GM12878 (cell line): ENCODE measurements at regions of chr20 and their contacts with region 1.

Region 1: GRCh38 chr20:55116598-55116997 is 641.2 kb downstream of the DOK5 start:
- DNase-seq: peak; percentile 25
- ATAC-seq: peak; percentile 74
- H3K4me3 ChIP-seq: no peak overlapping the region
- H3K27ac ChIP-seq: no peak overlapping the region
- H3K4me1 ChIP-seq: no peaks in the 10 kb centered on the region
- H3K27me3 ChIP-seq: no peaks in the 10 kb centered on the region
- CTCF ChIP-seq: no peak
- EP300 ChIP-seq: no peak
- POLR2A ChIP-seq: no peak
- RAD21 ChIP-seq: no peak

Region 2: DNA sequence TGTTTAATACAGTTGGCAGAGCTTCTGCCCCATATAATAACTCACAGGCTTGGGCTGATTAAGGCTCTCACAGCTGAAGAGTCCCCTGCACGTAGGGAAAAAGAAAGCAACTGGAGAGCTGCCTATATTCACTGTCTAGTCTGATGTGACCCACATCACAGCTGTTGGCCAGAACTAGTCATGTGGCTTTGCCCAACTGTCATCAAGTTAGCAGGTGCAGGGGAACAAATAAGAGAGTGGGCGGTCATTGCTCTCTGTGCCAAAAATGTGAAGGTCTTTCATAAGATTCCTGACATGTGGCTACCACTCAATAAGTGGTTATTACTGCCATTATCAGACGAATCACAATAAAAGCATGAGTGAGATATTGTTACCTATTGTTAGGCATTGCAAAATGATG is 24.0 kb after region 1 on chr20:
- CTCF ChIA-PET with region 1: interaction called, 3 read pairs
- POLR2A ChIA-PET with region 1: interaction called, 7 read pairs
- RAD21 ChIA-PET with region 1: interaction called, 16 read pairs
- SMC1A ChIA-PET with region 1: interaction called, 16 read pairs
- in situ Hi-C with region 1: no loop called
- intact Hi-C with region 1: no loop called
- DNase-seq: no peak
- ATAC-seq: peak; percentile 76
- H3K4me3 ChIP-seq: no peak overlapping the region
- H3K27ac ChIP-seq: no peak overlapping the region
- H3K4me1 ChIP-seq: no peaks in the 10 kb centered on the region
- H3K27me3 ChIP-seq: no peaks in the 10 kb centered on the region
- CTCF ChIP-seq: no peak
- EP300 ChIP-seq: no peak
- POLR2A ChIP-seq: no peak
- RAD21 ChIP-seq: no peak

Region 3: GRCh38 chr20:55153001-55153645 is 36.5 kb after region 1 on chr20:
- CTCF ChIA-PET with region 1: no interaction called
- POLR2A ChIA-PET with region 1: no interaction called
- RAD21 ChIA-PET with region 1: no interaction called
- SMC1A ChIA-PET with region 1: no interaction called
- in situ Hi-C with region 1: loop called (anchors 5 kb)
- intact Hi-C with region 1: no loop called
- DNase-seq: no peak
- ATAC-seq: no peak
- H3K4me3 ChIP-seq: no peak overlapping the region
- H3K27ac ChIP-seq: no peak overlapping the region
- H3K4me1 ChIP-seq: no peaks in the 10 kb centered on the region
- H3K27me3 ChIP-seq: no peaks in the 10 kb centered on the region
- CTCF ChIP-seq: no peak
- EP300 ChIP-seq: no peak
- POLR2A ChIP-seq: no peak
- RAD21 ChIP-seq: no peak